Activated CD4-positive, alpha-beta memory T cell treated with anti-CD3 and anti-CD28 coated beads, Interleukin-2, amount 10 ng/mL, durations not matched to agents 7 days and 5 days (primary cell): ENCODE measurements at regions of chr12 and their contacts with region 1.

Region 1: GRCh38 chr12:53200458-53201176 is 6.4 kb downstream of the ITGB7 start:
- DNase-seq: peak; percentile 47
- H3K4me3 Mint-ChIP-seq: peak overlapping the region; percentile 66
- H3K27ac Mint-ChIP-seq: peak overlapping the region; percentile 84
- H3K4me1 Mint-ChIP-seq: peaks cover 84% of the 10 kb centered on the region
- H3K27me3 Mint-ChIP-seq: no peaks in the 10 kb centered on the region

Region 2: DNA sequence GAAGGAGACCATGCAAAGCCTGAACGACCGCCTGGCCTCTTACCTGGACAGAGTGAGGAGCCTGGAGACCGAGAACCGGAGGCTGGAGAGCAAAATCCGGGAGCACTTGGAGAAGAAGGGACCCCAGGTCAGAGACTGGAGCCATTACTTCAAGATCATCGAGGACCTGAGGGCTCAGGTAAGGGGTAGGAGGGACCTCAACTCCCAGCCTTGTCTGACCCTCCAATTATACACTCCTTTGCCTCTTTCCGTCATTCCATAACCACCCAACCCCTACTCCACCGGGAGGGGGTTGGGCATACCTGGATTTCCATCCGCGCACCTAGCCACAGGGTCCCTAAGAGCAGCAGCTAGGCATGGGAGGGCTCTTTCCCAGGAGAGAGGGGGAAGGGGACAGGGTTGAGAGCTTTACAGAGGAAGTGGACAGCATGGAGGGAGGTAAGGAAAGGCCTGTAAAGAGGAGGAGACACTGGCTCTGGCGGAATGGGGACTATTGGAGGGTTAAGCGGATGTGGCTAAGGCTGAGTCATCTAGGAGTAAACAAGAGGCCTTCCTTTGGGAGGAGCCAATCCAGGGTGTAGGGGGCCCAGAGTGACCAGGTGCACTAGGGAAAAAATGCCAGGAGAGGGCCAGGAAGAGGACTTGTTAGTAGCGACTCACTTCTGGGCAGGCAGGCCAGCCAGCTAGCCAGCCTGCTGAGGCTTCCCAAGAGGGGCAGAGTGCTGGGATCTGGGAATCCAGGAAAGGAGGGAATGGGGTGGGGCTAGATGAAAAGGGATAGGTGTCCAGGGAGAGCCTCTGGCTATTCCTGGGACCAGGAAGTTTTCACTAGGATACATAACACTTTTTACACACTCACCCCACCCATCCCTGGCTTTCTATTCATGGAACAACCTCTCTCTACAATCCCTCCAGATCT is 250.9 kb before region 1 on chr12:
- CTCF ChIA-PET with region 1: no interaction called
- POLR2A ChIA-PET with region 1: no interaction called
- DNase-seq: no peak
- H3K4me3 Mint-ChIP-seq: peak overlapping the region; percentile 63
- H3K27ac Mint-ChIP-seq: no peak overlapping the region
- H3K4me1 Mint-ChIP-seq: peaks cover 2% of the 10 kb centered on the region
- H3K27me3 Mint-ChIP-seq: peaks cover 9% of the 10 kb centered on the region

Region 3: GRCh38 chr12:53115112-53115890 is 85.3 kb before region 1 on chr12:
- CTCF ChIA-PET with region 1: no interaction called
- POLR2A ChIA-PET with region 1: no interaction called
- DNase-seq: no peak
- H3K4me3 Mint-ChIP-seq: no peak overlapping the region
- H3K27ac Mint-ChIP-seq: no peak overlapping the region
- H3K4me1 Mint-ChIP-seq: no peaks in the 10 kb centered on the region
- H3K27me3 Mint-ChIP-seq: no peaks in the 10 kb centered on the region

Region 4: DNA sequence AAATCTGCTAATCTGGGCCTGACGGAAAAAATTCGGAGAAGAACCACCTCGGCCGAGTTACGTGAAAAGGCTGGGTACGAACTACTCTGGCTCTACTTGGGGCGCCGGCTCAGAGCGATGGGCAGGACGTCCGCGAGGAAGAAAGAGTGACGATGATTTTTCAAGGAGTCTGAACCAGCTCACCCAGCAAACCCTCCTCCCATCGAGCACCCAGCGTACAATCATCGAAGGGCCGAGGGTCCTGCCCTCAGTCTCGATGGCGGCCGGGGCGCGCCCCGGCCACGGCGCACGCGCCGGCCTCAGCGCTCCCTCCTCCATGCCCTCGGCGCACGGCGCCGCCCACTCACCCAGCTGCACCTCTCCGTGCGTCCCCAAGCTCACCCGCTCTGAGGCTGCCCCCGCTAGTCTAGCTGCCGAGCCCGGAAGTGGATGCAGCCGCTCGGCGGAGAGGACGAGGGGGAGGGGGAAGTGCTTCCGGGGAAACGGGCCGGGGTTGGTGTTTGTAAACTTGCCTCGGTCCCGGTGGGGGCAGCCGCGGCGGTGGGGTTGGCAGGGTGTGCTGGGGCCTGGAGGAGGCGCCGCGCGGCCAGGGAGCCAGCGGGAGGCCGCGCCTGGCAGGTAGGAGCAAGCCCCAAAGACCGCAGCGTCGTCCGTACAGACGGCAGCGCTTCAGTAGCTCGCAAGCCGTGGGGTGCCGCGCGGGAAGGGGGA is 20.2 kb before region 1 on chr12 and contains the starts of genes CSAD and ZNF740:
- CTCF ChIA-PET with region 1: interaction called, 20 read pairs
- POLR2A ChIA-PET with region 1: interaction called, 263 read pairs
- DNase-seq: peak; percentile 98
- H3K4me3 Mint-ChIP-seq: peak within 1 kb of the TSS; percentile 84
- H3K27ac Mint-ChIP-seq: peak within 1 kb of the TSS; percentile 93
- H3K4me1 Mint-ChIP-seq: peaks cover 58% of the 10 kb centered on the region
- H3K27me3 Mint-ChIP-seq: no peaks in the 10 kb centered on the region
- total RNA-seq, gene CSAD: 28.6 to 31.0 TPM
- total RNA-seq, gene ZNF740: 33.7 to 45.5 TPM

Region 5: DNA sequence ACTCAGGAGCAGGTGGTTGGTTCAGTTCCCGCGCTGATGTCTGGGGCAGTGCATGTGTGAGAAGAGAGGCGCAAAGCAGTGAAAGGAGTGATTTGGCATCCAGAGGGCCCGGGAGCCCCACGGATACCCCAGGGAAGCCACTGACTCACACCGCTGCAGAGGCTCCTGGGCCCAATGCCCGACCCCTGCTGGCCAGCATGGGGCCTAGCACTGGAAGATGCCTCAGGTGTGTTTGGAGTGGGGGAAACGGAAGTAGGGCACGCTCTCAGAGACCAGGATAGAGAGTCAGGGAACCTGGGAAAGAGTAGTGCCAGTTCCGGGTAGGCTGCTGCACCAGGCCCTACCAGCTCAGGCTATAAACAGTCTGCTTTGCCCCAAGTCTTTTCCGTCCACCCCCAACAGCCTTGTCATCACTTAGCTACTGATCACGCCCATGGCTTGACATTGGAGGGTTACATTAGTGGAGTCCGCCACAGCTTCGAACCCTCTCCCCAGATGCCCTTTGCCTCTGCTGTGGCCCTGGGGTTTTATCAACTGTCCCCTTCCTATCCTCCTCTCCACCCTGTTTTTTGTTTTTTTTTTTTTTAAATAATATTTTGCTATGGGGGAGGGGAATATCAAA is 10.4 kb before region 1 on chr12:
- CTCF ChIA-PET with region 1: interaction called, 20 read pairs
- POLR2A ChIA-PET with region 1: interaction called, 263 read pairs
- DNase-seq: peak; percentile 43
- H3K4me3 Mint-ChIP-seq: no peak overlapping the region
- H3K27ac Mint-ChIP-seq: peak overlapping the region; percentile 50
- H3K4me1 Mint-ChIP-seq: peaks cover 21% of the 10 kb centered on the region
- H3K27me3 Mint-ChIP-seq: no peaks in the 10 kb centered on the region